ENCODE measurements at regions of chr12 and their contacts with region 1.

Region 1: GRCh38 chr12:74689071-74689655 is 151.5 kb downstream of the ATXN7L3B start:
- DNase-seq: peak; percentile 5
- H3K4me3 ChIP-seq: no peak overlapping the region
- H3K27ac ChIP-seq: no peak overlapping the region
- H3K4me1 ChIP-seq: no peaks in the 10 kb centered on the region
- H3K27me3 ChIP-seq: no peaks in the 10 kb centered on the region
- CTCF ChIP-seq: peak; percentile 81
- EP300 ChIP-seq: no peak
- RAD21 ChIP-seq: peak; percentile 61

Region 2: DNA sequence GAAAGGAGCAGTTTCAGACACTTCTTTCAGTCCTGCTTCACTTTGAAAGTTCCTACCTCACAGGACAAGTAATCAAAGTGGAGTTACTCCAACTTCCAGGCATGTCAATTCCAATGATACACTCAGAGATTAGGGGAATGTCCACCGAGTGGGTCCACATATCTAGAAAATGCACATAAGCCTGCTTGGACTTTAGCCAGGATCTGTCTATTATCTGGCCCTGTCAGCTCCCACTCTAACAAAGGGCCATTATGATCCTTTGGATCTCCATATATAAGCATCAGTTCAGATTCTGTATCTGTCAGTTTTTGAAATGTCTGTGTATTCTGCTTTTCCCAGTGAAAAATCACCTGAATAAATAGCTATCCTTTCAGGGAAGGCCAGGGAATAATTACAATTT is 264.4 kb before region 1 on chr12:
- CTCF ChIA-PET with region 1: no interaction called
- POLR2A ChIA-PET with region 1: no interaction called
- DNase-seq: no peak
- H3K4me3 ChIP-seq: no peak overlapping the region
- H3K27ac ChIP-seq: no peak overlapping the region
- H3K4me1 ChIP-seq: no peaks in the 10 kb centered on the region
- H3K27me3 ChIP-seq: no peaks in the 10 kb centered on the region
- CTCF ChIP-seq: no peak
- EP300 ChIP-seq: no peak
- RAD21 ChIP-seq: no peak

Region 3: DNA sequence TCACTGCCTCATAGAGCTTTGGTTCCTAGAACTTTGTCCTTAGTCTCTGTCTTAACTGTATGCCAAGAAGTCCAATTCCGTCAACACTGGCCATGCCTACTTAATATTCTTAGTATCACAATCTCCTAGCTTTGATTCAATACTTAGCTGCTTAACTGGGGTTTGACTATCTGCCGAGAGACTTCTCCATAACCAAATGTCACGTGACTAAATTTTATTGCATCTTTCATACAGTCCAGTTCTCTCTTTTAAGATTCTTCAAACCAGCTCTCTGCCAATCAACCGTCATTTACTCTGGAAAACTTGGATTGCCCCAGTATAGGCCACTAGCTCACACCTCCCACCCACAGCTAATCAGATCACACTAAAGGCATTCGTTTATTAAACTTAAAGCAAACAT is 28.7 kb before region 1 on chr12:
- CTCF ChIA-PET with region 1: interaction called, 10 read pairs
- POLR2A ChIA-PET with region 1: no interaction called
- DNase-seq: no peak
- H3K4me3 ChIP-seq: no peak overlapping the region
- H3K27ac ChIP-seq: no peak overlapping the region
- H3K4me1 ChIP-seq: no peaks in the 10 kb centered on the region
- H3K27me3 ChIP-seq: no peaks in the 10 kb centered on the region; the same call in 1 of the 2 replicates
- CTCF ChIP-seq: no peak
- EP300 ChIP-seq: no peak
- RAD21 ChIP-seq: no peak

Measured in SK-N-SH (cell line).